Activated B cell treated with CpG ODN at 0.5 μM for 24 hours (primary cell): ENCODE measurements at regions of chr5 and their contacts with region 1.

Region 1: GRCh38 chr5:170278611-170279452 is 18.7 kb downstream of the LCP2 start:
- DNase-seq: peak; percentile 62
- ATAC-seq: peak; percentile 86
- H3K4me3 Mint-ChIP-seq: peak overlapping the region; percentile 71
- H3K27ac Mint-ChIP-seq: peak overlapping the region; percentile 95
- H3K4me1 Mint-ChIP-seq: peaks cover 55% of the 10 kb centered on the region
- H3K27me3 Mint-ChIP-seq: no peaks in the 10 kb centered on the region
- CTCF ChIP-seq: no peak

Region 2: GRCh38 chr5:169856571-169856970 is 422.3 kb before region 1 on chr5:
- CTCF ChIA-PET with region 1: no interaction called
- POLR2A ChIA-PET with region 1: no interaction called
- intact Hi-C with region 1: no loop called
- DNase-seq: no peak
- ATAC-seq: no peak
- H3K4me3 Mint-ChIP-seq: no peak overlapping the region
- H3K27ac Mint-ChIP-seq: no peak overlapping the region
- H3K4me1 Mint-ChIP-seq: peaks cover 11% of the 10 kb centered on the region
- H3K27me3 Mint-ChIP-seq: no peaks in the 10 kb centered on the region
- CTCF ChIP-seq: no peak

Region 3: GRCh38 chr5:170235876-170236864 is 42.7 kb before region 1 on chr5:
- CTCF ChIA-PET with region 1: no interaction called
- POLR2A ChIA-PET with region 1: no interaction called
- intact Hi-C with region 1: no loop called
- DNase-seq: no peak
- ATAC-seq: no peak
- H3K4me3 Mint-ChIP-seq: no peak overlapping the region
- H3K27ac Mint-ChIP-seq: no peak overlapping the region
- H3K4me1 Mint-ChIP-seq: no peaks in the 10 kb centered on the region
- H3K27me3 Mint-ChIP-seq: no peaks in the 10 kb centered on the region
- CTCF ChIP-seq: no peak

Region 4: GRCh38 chr5:170247363-170247762 is 31.5 kb before region 1 on chr5:
- CTCF ChIA-PET with region 1: no interaction called
- POLR2A ChIA-PET with region 1: no interaction called
- intact Hi-C with region 1: no loop called
- DNase-seq: no peak
- ATAC-seq: no peak
- H3K4me3 Mint-ChIP-seq: no peak overlapping the region
- H3K27ac Mint-ChIP-seq: no peak overlapping the region
- H3K4me1 Mint-ChIP-seq: peaks cover 2% of the 10 kb centered on the region
- H3K27me3 Mint-ChIP-seq: no peaks in the 10 kb centered on the region
- CTCF ChIP-seq: no peak

Region 5: GRCh38 chr5:170293273-170293672 is 14.4 kb after region 1 on chr5:
- CTCF ChIA-PET with region 1: interaction called, 5 read pairs
- POLR2A ChIA-PET with region 1: interaction called, 26 read pairs
- intact Hi-C with region 1: loop called (anchors 1 kb)
- DNase-seq: peak; percentile 60
- ATAC-seq: peak; percentile 88
- H3K4me3 Mint-ChIP-seq: peak overlapping the region; percentile 12
- H3K27ac Mint-ChIP-seq: peak overlapping the region; percentile 37
- H3K4me1 Mint-ChIP-seq: peaks cover 57% of the 10 kb centered on the region
- H3K27me3 Mint-ChIP-seq: peaks cover 15% of the 10 kb centered on the region
- CTCF ChIP-seq: no peak

Region 6: GRCh38 chr5:170333161-170333910 is 54.5 kb after region 1 on chr5:
- CTCF ChIA-PET with region 1: interaction called, 289 read pairs
- POLR2A ChIA-PET with region 1: interaction called, 69 read pairs
- intact Hi-C with region 1: loop called (anchors 1 kb)
- DNase-seq: no peak
- ATAC-seq: no peak
- H3K4me3 Mint-ChIP-seq: peak overlapping the region; percentile 25
- H3K27ac Mint-ChIP-seq: no peak overlapping the region
- H3K4me1 Mint-ChIP-seq: peaks cover 10% of the 10 kb centered on the region
- H3K27me3 Mint-ChIP-seq: no peaks in the 10 kb centered on the region
- CTCF ChIP-seq: no peak

Region 7: DNA sequence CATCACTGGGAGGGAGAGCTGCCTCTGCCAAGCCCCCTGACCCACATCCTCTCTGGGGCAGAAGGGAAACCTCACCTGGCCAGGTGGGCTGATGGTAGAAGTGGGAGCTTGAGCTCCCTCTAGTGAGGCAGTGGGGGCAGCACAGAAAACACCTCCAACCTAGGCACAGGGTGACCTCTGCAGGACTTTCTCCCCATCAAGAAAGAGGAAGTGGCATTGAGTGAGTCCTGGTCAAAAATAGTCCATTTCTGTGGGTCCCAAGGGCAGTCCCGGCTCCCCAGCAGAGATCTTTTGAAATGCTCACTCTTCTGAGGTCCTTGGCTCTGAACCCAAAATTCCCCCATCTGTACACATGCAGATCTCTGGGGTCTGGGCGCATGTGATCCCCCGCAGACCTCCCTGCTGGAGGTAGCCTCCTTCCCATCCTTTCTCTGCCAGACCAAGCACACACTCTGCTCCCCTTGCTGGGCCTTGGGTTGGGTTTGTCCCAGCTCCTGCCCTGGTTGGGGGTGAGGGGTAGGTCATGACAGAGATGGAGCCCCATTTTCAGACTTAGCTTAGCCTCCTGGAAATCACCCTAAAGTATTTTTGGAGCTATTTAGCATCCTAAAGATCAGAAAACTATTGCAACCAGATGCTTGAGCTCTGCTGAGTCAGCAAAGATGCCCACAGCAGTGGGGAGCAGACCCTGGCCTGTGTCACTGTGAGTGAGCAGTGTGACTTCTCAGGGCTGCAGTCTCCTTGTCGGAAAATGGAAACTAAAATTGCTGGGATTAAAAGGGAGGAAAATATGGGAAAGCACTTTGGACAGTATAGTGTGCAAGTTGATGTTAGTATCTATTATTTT is 60.3 kb after region 1 on chr5:
- CTCF ChIA-PET with region 1: interaction called, 289 read pairs
- POLR2A ChIA-PET with region 1: interaction called, 12 read pairs
- intact Hi-C with region 1: loop called (anchors 1 kb)
- DNase-seq: peak; percentile 35
- ATAC-seq: peak; percentile 90
- H3K4me3 Mint-ChIP-seq: no peak overlapping the region
- H3K27ac Mint-ChIP-seq: no peak overlapping the region
- H3K4me1 Mint-ChIP-seq: peaks cover 20% of the 10 kb centered on the region
- H3K27me3 Mint-ChIP-seq: no peaks in the 10 kb centered on the region
- CTCF ChIP-seq: peak; percentile 48

Region 8: DNA sequence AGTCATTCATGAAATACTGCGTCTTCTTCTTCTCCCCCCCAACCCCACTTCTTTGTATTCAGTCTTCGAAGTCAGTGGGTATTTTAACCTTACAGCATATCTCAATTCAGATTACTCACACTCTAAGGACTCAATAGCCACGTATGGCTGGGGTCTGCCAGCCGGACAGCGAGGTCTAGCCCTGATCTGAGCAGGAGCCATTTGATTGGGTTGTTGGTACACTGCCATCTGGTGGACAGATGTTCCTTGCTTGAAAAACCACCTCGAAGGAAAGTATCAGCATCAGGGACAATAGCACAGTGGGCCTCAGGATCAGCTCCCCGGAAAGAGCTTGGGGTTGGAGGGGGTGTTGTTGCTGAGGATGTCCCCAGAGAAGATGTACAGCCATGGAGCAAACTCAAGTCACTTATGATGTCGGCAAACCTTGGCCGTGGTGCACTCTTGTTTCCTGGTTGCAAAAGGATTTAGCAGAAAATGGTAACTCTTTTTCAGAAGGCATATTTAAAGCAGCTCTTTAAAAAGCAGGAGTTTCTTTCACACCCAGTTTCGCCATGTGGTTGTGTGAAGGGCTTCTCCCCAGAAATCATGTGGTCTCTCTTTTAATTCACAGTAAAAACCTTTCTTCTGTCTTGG is 142.1 kb after region 1 on chr5:
- CTCF ChIA-PET with region 1: interaction called, 5 read pairs
- POLR2A ChIA-PET with region 1: no interaction called
- intact Hi-C with region 1: loop called (anchors 1 kb)
- DNase-seq: no peak
- ATAC-seq: peak; percentile 58
- H3K4me3 Mint-ChIP-seq: no peak overlapping the region
- H3K27ac Mint-ChIP-seq: no peak overlapping the region
- H3K4me1 Mint-ChIP-seq: peaks cover 4% of the 10 kb centered on the region
- H3K27me3 Mint-ChIP-seq: peaks cover 23% of the 10 kb centered on the region
- CTCF ChIP-seq: peak; percentile 35